ENCODE measurements at regions of chr20 and their contacts with region 1.

Region 1: DNA sequence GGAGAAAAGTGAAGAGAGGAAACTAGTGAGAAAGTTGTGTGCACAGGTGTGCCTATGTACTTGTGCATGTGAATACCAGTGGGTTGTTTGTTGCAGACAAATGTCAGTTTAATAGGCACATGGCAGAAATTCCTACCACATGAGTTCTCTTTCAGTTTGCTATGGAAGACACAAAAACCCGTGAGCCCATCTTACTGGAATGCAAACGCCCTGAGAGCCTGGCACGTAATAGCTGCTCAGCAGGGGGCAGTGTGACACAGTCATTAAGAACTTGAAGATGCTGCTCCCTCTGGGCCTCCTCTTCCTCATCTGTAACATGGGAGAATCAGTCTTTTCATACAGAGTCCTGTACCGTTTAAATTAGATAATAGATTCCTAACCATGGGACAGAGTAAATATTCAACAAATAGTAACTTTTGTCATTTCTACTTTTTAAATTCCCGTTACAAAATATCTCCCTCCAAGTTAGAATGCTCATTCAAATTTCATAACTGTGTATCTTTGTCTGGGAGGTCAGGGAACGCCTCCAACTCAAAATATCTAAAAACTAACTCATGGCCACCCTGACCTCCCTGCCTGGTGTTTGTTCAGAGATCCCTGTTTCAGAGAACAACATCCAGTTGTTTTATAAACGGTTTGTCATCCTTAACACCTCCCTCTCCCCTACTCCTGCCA is 802.9 kb downstream of the MAFB start:
- ATAC-seq: peak in 3 of 8 experiments; percentile 86 to 98 (median 93)
- H3K4me3 ChIP-seq: no peak overlapping the region
- H3K27ac ChIP-seq: no peak overlapping the region
- H3K4me1 ChIP-seq: no peaks in the 10 kb centered on the region

Region 2: GRCh38 chr20:39264506-39265172 is 621.5 kb before region 1 on chr20:
- in situ Hi-C with region 1: loop called in 1 of 9 experiments (anchors 25 kb)
- ATAC-seq: peak; percentile 64 to 94 (median 78)
- H3K4me3 ChIP-seq: no peak overlapping the region
- H3K27ac ChIP-seq: no peak overlapping the region
- H3K4me1 ChIP-seq: peaks cover 13 to 28% of the 10 kb centered on the region in 2 donors

Region 3: DNA sequence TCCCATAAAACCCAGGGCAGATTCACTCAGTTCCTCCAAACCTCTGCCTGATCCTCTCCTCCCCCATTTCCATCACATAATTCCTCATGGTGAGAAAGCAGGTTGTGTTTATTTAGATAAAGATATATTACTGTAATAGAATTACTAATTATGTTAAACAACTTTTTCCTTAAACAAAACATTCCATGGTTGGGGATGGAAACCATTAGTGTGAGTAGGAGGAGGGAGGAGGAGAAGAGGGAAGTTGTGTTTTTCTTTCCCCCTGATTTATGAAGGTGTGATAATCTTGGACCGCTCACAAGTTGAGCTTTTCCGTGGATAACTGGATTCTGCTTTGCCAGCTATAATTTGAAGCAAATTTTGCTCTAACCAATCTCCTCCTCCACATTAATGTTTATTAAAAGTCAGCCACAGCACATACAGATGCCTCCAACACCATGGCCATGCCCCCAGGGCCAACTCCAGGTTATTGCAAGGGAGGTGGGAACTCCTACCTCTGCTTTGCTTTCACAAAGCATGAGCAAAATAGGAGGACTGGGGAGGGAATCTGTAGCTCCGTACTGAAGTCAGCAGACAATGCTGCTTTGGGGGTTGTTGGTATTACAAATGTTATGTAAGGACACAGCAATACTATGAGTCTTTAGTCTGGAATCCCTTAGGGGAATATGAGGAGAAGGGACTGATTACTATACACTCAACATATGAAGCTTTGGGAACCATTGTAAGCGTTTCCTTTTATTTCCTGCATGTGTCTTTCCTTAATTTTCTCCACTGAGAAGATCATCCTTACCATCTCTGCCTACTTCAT is 382.0 kb before region 1 on chr20:
- in situ Hi-C with region 1: no loop called
- ATAC-seq: no peak
- H3K4me3 ChIP-seq: no peak overlapping the region
- H3K27ac ChIP-seq: no peak overlapping the region
- H3K4me1 ChIP-seq: no peaks in the 10 kb centered on the region

Region 4: DNA sequence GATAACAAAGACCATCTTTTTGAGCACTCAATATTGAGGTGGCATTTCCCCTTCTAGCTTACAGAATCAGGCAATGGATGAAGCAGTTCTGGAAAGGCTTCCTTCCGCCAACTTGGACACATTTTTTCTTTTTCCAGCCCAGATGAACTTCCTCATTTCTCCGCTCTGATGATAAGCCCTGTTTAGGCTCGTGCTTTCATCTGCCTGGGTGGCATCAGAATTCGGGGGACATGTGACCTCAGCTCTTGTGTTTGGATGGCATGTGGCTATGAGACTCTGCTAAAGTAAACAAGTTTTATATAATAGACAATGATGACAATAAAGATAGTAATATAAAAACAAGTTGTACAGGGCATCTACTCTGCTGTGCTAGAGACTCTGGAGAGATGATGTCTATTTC is 127.2 kb before region 1 on chr20:
- in situ Hi-C with region 1: no loop called
- ATAC-seq: no peak
- H3K4me3 ChIP-seq: no peak overlapping the region
- H3K27ac ChIP-seq: no peak overlapping the region
- H3K4me1 ChIP-seq: no peaks in the 10 kb centered on the region

Region 5: GRCh38 chr20:40233406-40233805 is 347.3 kb after region 1 on chr20:
- in situ Hi-C with region 1: loop called in 1 of 9 experiments (anchors 25 kb)
- ATAC-seq: peak in 2 of 8 experiments; percentile 53 to 69
- H3K4me3 ChIP-seq: no peak overlapping the region
- H3K27ac ChIP-seq: no peak overlapping the region
- H3K4me1 ChIP-seq: peaks cover 0 to 7% of the 10 kb centered on the region in 2 donors